ENCODE measurements at regions of chr5 and their contacts with region 1.

Region 1: GRCh38 chr5:133423618-133424282 is 188.6 kb downstream of the FSTL4 start:
- DNase-seq: peak; percentile 52 to 75
- ATAC-seq: peak; percentile 71 to 90 (median 74)
- H3K4me3 ChIP-seq: no peak overlapping the region
- H3K4me3 Mint-ChIP-seq: no peak overlapping the region
- H3K27ac ChIP-seq: no peak overlapping the region
- H3K27ac Mint-ChIP-seq: no peak overlapping the region
- H3K4me1 ChIP-seq: peaks cover 5% of the 10 kb centered on the region
- H3K4me1 Mint-ChIP-seq: peaks cover 6 to 9% of the 10 kb centered on the region in 2 donors
- H3K27me3 ChIP-seq: no peaks in the 10 kb centered on the region
- H3K27me3 Mint-ChIP-seq: peaks cover 10 to 26% of the 10 kb centered on the region in 2 donors
- CTCF ChIP-seq: peak; percentile 78

Region 2: DNA sequence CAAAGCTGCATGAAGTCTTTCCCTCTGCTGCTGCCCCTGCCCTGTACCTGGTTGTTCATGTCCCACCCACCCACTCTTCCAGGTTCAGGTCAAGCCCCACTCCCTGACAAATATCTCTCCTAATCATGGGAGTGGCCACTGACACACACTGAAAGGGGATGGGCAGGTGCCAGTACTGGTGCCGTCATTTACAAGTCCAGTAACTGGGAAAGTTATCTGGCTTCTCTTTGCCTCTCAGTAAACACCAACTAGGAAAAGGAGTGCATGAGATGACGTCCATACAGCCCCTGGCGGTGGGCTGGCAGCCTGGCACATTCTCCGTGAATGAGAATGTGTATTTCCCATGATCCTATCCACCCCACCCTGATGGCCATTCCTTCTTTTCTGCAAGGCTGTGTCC is 36.7 kb before region 1 on chr5:
- intact Hi-C with region 1: no loop called
- DNase-seq: no peak
- ATAC-seq: no peak
- H3K4me3 ChIP-seq: no peak overlapping the region
- H3K4me3 Mint-ChIP-seq: no peak overlapping the region
- H3K27ac ChIP-seq: no peak overlapping the region
- H3K27ac Mint-ChIP-seq: no peak overlapping the region
- H3K4me1 ChIP-seq: no peaks in the 10 kb centered on the region
- H3K4me1 Mint-ChIP-seq: no peaks in the 10 kb centered on the region
- H3K27me3 ChIP-seq: no peaks in the 10 kb centered on the region
- H3K27me3 Mint-ChIP-seq: peaks cover 8 to 19% of the 10 kb centered on the region in 2 donors
- CTCF ChIP-seq: no peak

Region 3: GRCh38 chr5:133539818-133540217 is 116.1 kb after region 1 on chr5:
- intact Hi-C with region 1: no loop called
- DNase-seq: no peak
- ATAC-seq: no peak
- H3K4me3 ChIP-seq: no peak overlapping the region
- H3K4me3 Mint-ChIP-seq: no peak overlapping the region
- H3K27ac ChIP-seq: no peak overlapping the region
- H3K27ac Mint-ChIP-seq: no peak overlapping the region
- H3K4me1 ChIP-seq: no peaks in the 10 kb centered on the region
- H3K4me1 Mint-ChIP-seq: no peaks in the 10 kb centered on the region
- H3K27me3 ChIP-seq: peaks cover 4% of the 10 kb centered on the region
- H3K27me3 Mint-ChIP-seq: peaks cover 23 to 64% of the 10 kb centered on the region in 2 donors
- CTCF ChIP-seq: no peak

Region 4: GRCh38 chr5:133618141-133618540 is 194.4 kb after region 1 on chr5:
- intact Hi-C with region 1: no loop called
- DNase-seq: peak in 1 of 2 donors; percentile 23
- ATAC-seq: no peak
- H3K4me3 ChIP-seq: no peak overlapping the region
- H3K4me3 Mint-ChIP-seq: no peak overlapping the region
- H3K27ac ChIP-seq: no peak overlapping the region
- H3K27ac Mint-ChIP-seq: no peak overlapping the region
- H3K4me1 ChIP-seq: no peaks in the 10 kb centered on the region
- H3K4me1 Mint-ChIP-seq: peaks cover 6 to 11% of the 10 kb centered on the region in 2 donors
- H3K27me3 ChIP-seq: peaks cover 12% of the 10 kb centered on the region
- H3K27me3 Mint-ChIP-seq: peaks cover 34 to 38% of the 10 kb centered on the region in 2 donors
- CTCF ChIP-seq: no peak

Region 5: DNA sequence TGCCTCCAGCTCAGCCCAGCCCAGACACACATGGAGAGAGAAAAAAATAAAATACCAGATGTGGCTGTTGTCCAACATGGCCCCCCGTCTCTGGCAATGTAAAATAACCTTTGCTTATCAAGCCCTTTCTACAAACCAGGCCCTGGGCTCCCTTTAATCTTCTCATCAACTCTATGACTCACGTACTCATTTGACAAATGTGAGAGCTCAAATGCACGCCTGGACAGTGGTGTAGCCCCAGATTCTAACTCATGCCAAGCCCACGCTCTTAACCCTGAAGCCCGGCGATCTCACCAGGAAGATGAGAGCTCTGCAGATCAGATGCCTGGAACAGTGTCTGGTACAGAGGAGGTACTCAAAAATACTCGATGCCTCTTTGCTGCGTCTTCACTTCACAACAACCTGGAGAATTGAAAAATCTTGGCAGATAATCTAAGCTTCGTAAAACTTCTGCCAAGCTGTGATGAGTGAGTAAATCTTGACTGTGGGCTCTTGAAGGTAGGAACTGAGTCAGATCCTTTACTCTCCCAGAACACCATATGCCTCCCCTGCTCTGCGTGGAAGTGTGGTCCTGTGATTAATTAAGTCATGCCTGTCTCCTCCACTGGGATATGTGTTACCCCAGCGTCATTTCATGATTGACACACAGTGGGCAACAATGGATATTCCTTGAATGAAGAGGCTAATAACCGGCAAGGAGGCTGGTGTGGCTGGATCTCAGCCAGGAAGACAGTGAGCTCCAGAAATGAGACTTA is 290.6 kb after region 1 on chr5:
- intact Hi-C with region 1: no loop called
- DNase-seq: no peak
- ATAC-seq: no peak
- H3K4me3 ChIP-seq: no peak overlapping the region
- H3K4me3 Mint-ChIP-seq: no peak overlapping the region
- H3K27ac ChIP-seq: no peak overlapping the region
- H3K27ac Mint-ChIP-seq: no peak overlapping the region
- H3K4me1 ChIP-seq: no peaks in the 10 kb centered on the region
- H3K4me1 Mint-ChIP-seq: no peaks in the 10 kb centered on the region
- H3K27me3 ChIP-seq: peaks cover 2% of the 10 kb centered on the region
- H3K27me3 Mint-ChIP-seq: peaks cover 7 to 30% of the 10 kb centered on the region in 2 donors
- CTCF ChIP-seq: no peak

Region 6: GRCh38 chr5:133868946-133869518 is 445.3 kb after region 1 on chr5:
- intact Hi-C with region 1: loop called (anchors 2 kb)
- DNase-seq: peak; percentile 40 to 85
- ATAC-seq: peak in 2 of 3 donors; percentile 44 to 78
- H3K4me3 ChIP-seq: no peak overlapping the region
- H3K4me3 Mint-ChIP-seq: no peak overlapping the region
- H3K27ac ChIP-seq: no peak overlapping the region
- H3K27ac Mint-ChIP-seq: no peak overlapping the region
- H3K4me1 ChIP-seq: no peaks in the 10 kb centered on the region
- H3K4me1 Mint-ChIP-seq: peaks cover 0 to 5% of the 10 kb centered on the region in 2 donors
- H3K27me3 ChIP-seq: no peaks in the 10 kb centered on the region
- H3K27me3 Mint-ChIP-seq: peaks cover 18 to 31% of the 10 kb centered on the region in 2 donors
- CTCF ChIP-seq: peak; percentile 58

Measured in natural killer cell (primary cell).